ENCODE measurements at regions of chr14 and their contacts with region 1.

Region 1: DNA sequence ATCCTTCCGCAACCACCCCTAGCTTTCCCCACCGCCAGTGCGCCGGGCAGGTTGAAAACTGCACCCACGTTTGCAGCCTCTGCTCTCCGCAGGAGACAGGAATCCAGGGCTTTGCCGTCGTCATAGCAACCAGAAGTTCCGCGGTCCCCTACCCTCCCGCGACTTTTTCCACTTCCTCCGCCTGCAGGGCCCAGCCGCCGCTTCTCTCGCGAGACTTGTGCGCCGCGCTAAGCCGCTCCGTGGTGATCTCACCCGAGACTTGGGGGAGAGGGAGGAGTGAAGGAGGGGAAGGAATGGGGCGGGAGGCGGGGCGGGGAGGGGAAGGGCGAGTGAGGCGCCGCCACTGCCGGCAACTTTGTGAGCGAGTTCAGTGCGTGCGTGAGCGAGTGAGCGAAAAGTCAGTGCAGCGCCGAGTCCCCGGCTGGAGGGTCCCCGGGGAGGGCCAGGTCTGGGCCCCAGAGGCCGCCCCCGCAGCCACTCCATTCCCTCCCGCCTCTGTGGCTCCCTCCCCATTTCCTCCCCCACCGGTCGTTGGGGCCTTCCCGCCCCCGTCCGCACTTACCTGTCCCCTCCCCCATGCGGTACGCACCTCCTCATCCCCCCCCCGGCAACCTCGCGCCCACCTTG is 413.0 kb downstream of the PCNX1 start:
- DNase-seq: peak; percentile 99
- H3K4me3 ChIP-seq: peak within 1 kb of the TSS; percentile 78 to 94 (median 89)
- H3K27ac ChIP-seq: peak within 1 kb of the TSS; percentile 74
- H3K4me1 ChIP-seq: peaks cover 11% of the 10 kb centered on the region
- H3K27me3 ChIP-seq: no peaks in the 10 kb centered on the region
- CTCF ChIP-seq: no peak
- POLR2A ChIP-seq: peak; percentile 91

Region 2: DNA sequence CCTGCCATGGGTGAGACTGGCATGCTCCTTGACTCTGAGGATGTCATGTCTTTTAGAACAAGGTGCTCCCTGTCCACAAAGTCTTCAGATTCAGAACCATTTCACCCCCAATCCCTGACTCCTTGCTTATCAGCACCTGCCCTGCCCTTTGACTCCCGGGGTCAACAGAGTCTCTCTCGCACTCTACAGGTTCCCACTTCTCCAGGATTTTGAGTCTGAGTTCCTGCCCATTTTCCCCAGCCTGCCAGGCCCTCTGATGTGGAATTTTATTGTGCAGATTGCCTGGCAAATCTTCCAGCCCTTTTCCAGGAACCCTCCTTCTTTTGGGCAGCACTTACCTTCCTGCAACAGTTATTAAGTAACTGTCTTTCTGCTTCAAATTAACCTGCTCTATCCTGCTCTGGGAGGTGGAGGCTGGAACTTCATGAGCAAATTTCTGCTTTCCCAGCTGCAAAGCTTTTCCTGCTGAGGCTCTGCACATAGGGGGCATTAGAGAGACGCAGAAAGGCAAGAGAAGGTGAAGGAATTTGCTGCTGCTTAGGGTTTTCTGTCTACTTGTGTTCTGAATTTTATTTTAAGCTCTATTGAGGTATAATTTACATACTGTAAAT is 153.9 kb before region 1 on chr14:
- CTCF ChIA-PET with region 1: interaction called, 14 read pairs
- POLR2A ChIA-PET with region 1: no interaction called
- dilution Hi-C with region 1: no loop called
- intact Hi-C with region 1: no loop called
- DNase-seq: peak; percentile 64
- H3K4me3 ChIP-seq: no peak overlapping the region
- H3K27ac ChIP-seq: no peak overlapping the region
- H3K4me1 ChIP-seq: no peaks in the 10 kb centered on the region
- H3K27me3 ChIP-seq: peaks cover 0 to 1% of the 10 kb centered on the region in 2 experiments
- CTCF ChIP-seq: peak; percentile 13 to 66
- POLR2A ChIP-seq: no peak

Region 3: GRCh38 chr14:71261206-71261605 is 59.0 kb before region 1 on chr14:
- CTCF ChIA-PET with region 1: no interaction called
- POLR2A ChIA-PET with region 1: no interaction called
- dilution Hi-C with region 1: no loop called
- intact Hi-C with region 1: no loop called
- DNase-seq: peak; percentile 18
- H3K4me3 ChIP-seq: no peak overlapping the region
- H3K27ac ChIP-seq: no peak overlapping the region
- H3K4me1 ChIP-seq: no peaks in the 10 kb centered on the region
- H3K27me3 ChIP-seq: peaks cover 0 to 2% of the 10 kb centered on the region in 2 experiments
- CTCF ChIP-seq: no peak
- POLR2A ChIP-seq: no peak

Region 4: DNA sequence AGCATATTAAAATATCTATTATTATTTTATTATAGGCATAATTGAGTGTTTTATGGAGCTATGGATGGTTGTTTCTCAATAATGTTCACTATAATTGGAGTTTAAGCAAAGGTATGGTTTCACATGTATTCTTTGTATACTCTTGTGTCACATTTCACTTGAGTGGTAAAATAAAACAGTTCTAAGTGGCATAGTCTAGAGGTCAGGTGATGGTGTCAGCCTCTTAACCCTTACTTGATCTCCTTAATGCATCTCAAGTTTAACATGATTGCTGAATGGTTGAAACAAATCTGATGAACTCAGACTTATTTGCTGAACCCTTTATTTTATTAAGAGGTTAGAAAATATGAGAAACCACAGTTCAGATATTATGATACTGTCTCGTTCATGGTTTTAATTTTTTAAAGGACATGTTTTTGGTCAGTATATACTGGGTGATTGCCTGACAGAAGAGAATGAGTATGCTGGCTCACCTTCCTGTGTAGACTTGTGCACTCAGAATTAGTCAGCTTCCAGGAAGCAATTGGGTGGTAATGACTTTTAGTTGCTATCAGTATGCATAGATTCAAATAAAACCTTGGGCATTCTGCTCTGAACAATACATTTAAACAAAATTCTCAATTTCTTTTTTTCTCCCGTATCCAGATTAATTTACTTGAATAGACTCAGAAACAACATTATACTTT is 51.6 kb after region 1 on chr14:
- CTCF ChIA-PET with region 1: interaction called, 3 read pairs
- POLR2A ChIA-PET with region 1: no interaction called
- dilution Hi-C with region 1: no loop called
- intact Hi-C with region 1: loop called (anchors 2 kb)
- DNase-seq: peak; percentile 80
- H3K4me3 ChIP-seq: peak overlapping the region in 2 of 3 experiments; percentile 0 to 44
- H3K27ac ChIP-seq: peak overlapping the region; percentile 88
- H3K4me1 ChIP-seq: peaks cover 19% of the 10 kb centered on the region
- H3K27me3 ChIP-seq: no peaks in the 10 kb centered on the region
- CTCF ChIP-seq: no peak
- POLR2A ChIP-seq: peak; percentile 43

Region 5: GRCh38 chr14:71384007-71384845 is 64.0 kb after region 1 on chr14:
- CTCF ChIA-PET with region 1: no interaction called
- POLR2A ChIA-PET with region 1: no interaction called
- dilution Hi-C with region 1: no loop called
- intact Hi-C with region 1: no loop called
- DNase-seq: no peak
- H3K4me3 ChIP-seq: no peak overlapping the region
- H3K27ac ChIP-seq: no peak overlapping the region
- H3K4me1 ChIP-seq: peaks cover 4% of the 10 kb centered on the region
- H3K27me3 ChIP-seq: no peaks in the 10 kb centered on the region
- CTCF ChIP-seq: no peak
- POLR2A ChIP-seq: no peak

Region 6: GRCh38 chr14:71539650-71540285 is 219.5 kb after region 1 on chr14:
- CTCF ChIA-PET with region 1: interaction called, 4 read pairs
- POLR2A ChIA-PET with region 1: no interaction called
- dilution Hi-C with region 1: no loop called
- intact Hi-C with region 1: loop called (anchors 1 kb)
- DNase-seq: peak; percentile 59
- H3K4me3 ChIP-seq: no peak overlapping the region
- H3K27ac ChIP-seq: no peak overlapping the region
- H3K4me1 ChIP-seq: peaks cover 17% of the 10 kb centered on the region
- H3K27me3 ChIP-seq: no peaks in the 10 kb centered on the region
- CTCF ChIP-seq: no peak
- POLR2A ChIP-seq: no peak

Region 7: DNA sequence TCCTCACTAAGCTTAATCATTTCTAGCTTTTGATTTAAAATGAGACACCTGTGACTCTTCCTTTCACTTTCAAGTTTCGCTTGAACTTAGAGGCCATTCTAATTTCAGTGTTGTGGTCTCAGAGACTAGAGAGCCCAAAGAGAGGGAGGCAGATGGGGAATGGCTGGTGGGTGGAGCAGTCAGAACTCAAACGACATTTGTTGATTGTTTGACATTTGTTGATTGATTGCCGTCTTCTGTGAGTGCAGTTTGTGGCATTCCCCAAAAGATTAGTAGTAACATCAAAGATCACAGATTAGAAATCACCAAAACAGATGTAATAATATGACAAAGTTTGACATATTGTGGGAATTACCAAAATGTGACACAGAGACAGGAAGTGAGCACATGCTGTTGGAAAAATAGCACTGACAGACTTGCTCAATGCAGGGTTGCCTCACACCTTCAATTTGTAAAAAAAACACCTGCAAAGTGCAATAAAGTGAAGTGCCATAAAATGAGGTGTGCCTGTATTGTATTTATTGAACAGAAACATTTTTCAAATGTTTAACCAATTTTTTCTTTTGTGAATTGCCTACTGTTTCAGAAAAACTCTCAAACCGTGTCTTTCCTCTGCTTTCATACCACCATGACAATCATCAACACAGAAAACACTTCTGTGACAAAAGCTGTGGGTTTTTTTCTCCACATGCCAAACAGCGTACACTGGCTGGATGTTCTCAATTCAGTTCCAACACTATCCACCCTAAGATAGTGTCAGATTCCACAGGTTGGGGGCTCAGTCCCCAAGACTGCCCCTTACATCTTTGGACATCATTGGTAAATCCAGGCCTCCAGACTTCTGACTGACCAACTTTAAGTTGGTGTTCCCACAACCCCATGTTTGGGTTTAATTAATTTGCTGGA is 235.7 kb after region 1 on chr14:
- CTCF ChIA-PET with region 1: no interaction called
- POLR2A ChIA-PET with region 1: no interaction called
- dilution Hi-C with region 1: no loop called
- intact Hi-C with region 1: no loop called
- DNase-seq: peak; percentile 16
- H3K4me3 ChIP-seq: no peak overlapping the region
- H3K27ac ChIP-seq: no peak overlapping the region
- H3K4me1 ChIP-seq: no peaks in the 10 kb centered on the region
- H3K27me3 ChIP-seq: no peaks in the 10 kb centered on the region
- CTCF ChIP-seq: no peak
- POLR2A ChIP-seq: no peak

Region 8: DNA sequence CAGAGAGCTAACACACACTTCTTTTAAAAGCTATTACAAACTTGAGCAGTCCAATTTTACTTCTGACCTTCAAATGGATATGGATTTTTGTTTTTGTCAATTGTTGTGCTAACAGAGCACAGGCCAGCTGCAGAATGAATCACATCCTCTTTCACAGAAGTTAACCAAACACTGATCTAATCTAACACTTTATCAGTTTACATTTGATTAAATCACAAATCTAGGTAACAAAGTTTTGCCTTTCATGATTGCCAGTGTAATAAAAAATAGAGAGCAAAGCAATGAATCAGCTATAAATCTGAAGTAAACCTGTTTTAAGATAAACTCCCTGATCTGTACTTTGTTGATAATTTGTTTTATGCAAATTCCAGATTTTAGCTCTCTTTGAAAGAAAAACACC is 338.9 kb after region 1 on chr14:
- CTCF ChIA-PET with region 1: interaction called, 3 read pairs
- POLR2A ChIA-PET with region 1: interaction called, 3 read pairs
- dilution Hi-C with region 1: no loop called
- intact Hi-C with region 1: loop called (anchors 2 kb)
- DNase-seq: peak; percentile 90
- H3K4me3 ChIP-seq: peak overlapping the region in 1 of 3 experiments; percentile 32
- H3K27ac ChIP-seq: peak overlapping the region; percentile 79
- H3K4me1 ChIP-seq: peaks cover 24% of the 10 kb centered on the region
- H3K27me3 ChIP-seq: no peaks in the 10 kb centered on the region
- CTCF ChIP-seq: no peak
- POLR2A ChIP-seq: no peak

Region 9: DNA sequence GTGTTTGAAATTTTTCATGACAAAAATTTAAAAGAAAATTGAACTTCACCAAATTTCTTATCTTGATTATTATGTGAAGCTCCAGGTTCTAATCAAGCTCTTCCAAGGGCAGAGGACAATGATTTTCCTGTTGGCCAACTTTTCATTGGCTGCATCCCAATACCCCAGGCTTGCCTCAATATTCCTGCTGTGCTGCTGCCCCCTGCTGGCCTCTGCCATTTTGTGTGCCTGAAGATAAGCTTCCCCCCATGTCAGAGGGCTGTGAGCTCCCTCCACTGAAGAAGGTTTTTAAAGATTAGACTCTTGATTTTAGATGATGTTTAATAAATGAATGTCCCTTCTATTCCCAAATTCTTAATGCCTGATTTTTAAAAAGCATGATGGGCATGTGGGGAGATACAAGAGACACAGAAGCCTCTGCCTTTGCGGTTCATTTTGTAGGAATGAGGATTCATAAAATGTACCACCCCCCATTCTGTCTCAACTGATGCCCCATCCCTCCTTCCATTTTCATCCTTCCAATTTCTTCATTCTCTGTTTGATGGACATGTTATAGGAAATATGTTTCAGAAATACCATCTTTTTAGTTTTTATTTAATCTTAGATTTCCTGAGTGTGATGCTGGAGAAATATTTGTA is 535.3 kb after region 1 on chr14:
- CTCF ChIA-PET with region 1: interaction called, 16 read pairs
- POLR2A ChIA-PET with region 1: no interaction called
- dilution Hi-C with region 1: no loop called
- intact Hi-C with region 1: no loop called
- DNase-seq: peak; percentile 67
- H3K4me3 ChIP-seq: no peak overlapping the region
- H3K27ac ChIP-seq: no peak overlapping the region
- H3K4me1 ChIP-seq: peaks cover 3% of the 10 kb centered on the region
- H3K27me3 ChIP-seq: peaks cover 0 to 2% of the 10 kb centered on the region in 2 experiments
- CTCF ChIP-seq: peak; percentile 73 to 78
- POLR2A ChIP-seq: no peak

Measured in endothelial cell of umbilical vein (primary cell).